K562 (cell line): ENCODE measurements at regions of chr11 and their contacts with region 1.

Region 1: DNA sequence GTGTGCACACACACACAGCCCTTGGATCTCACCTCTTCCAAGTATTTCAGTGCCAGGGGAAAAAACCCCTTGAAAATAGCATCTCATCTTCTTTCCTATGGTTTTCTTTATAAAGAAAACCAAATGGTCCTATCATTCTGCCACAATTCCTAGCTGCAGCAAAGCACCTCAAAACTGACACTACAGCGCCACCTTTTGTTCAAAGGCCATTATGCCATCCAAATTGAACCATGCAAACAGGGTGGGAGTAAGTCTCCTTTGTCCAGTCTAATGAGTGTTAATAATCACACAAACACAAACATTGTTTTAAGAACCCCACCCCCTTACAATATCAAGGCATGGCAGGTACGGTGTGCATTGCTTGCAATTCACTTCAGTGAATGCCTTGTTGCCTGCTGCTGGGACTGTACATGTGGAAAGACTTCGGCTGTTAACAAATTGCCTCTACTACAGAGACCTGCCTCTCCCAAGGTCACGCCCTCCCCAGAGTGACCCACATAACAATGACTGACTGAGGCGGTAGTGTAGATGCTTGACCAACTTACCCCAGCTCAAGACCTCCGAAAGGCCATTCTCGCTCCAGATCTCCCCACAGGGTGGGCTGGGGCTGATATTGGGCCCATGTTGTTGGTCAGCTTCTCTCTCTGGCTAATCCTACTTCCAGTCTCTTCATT is 31.7 kb downstream of the FAM181B start:
- DNase-seq: peak; percentile 53 to 61 (median 56)
- ATAC-seq: peak; percentile 89
- H3K4me3 ChIP-seq: no peak overlapping the region
- H3K27ac ChIP-seq: no peak overlapping the region
- H3K4me1 ChIP-seq: no peaks in the 10 kb centered on the region
- H3K27me3 ChIP-seq: no peaks in the 10 kb centered on the region; a peak in 1 of 5 replicates
- CTCF ChIP-seq: peak; percentile 77 to 83 (median 77)
- EP300 ChIP-seq: no peak
- POLR2A ChIP-seq: no peak
- RAD21 ChIP-seq: peak; percentile 56 to 72

Region 2: DNA sequence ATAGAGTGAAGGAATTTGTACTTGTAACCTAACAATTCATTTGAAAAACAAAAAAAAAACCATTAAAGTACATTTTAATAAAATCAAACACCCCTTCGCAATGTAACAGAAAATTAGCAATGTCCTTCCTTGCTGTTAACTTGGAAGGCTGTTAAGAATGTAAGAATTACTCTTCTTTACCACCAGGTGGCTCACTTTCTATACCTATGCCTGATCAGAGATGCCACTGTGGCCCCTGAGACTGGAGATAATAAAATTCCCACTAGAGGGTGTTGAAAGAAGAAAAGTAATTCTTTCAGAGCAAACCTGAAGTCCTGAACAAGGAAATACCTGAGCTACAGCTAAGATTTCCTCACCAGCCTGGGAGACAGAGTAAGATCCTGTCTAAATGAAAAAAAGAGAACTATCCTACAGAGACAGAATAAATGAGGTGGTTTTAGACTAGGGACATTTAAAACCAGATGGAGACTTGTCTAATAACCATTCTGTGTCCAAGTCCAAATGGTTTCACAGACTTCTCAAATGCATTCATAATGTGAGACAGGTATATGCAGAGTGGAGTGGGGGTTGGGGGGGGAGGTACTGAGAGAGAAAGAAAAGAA is 1057.6 kb before region 1 on chr11:
- CTCF ChIA-PET with region 1: interaction called, 3 read pairs
- POLR2A ChIA-PET with region 1: no interaction called
- in situ Hi-C with region 1: no loop called
- intact Hi-C with region 1: loop called (anchors 1 kb)
- DNase-seq: peak; percentile 23 to 53 (median 38)
- ATAC-seq: peak; percentile 56; the same call in 1 of the 3 replicates
- H3K4me3 ChIP-seq: no peak overlapping the region
- H3K27ac ChIP-seq: no peak overlapping the region
- H3K4me1 ChIP-seq: no peaks in the 10 kb centered on the region
- H3K27me3 ChIP-seq: no peaks in the 10 kb centered on the region
- CTCF ChIP-seq: peak; percentile 48 to 53 (median 49); a peak in 3 of 6 replicates
- EP300 ChIP-seq: no peak
- POLR2A ChIP-seq: no peak
- RAD21 ChIP-seq: peak; percentile 33 to 54; a peak in 2 of 4 replicates

Region 3: GRCh38 chr11:82682003-82682751 is 19.8 kb before region 1 on chr11:
- CTCF ChIA-PET with region 1: interaction called, 13 read pairs
- POLR2A ChIA-PET with region 1: no interaction called
- in situ Hi-C with region 1: no loop called
- intact Hi-C with region 1: no loop called
- DNase-seq: peak; percentile 35 to 78 (median 44)
- ATAC-seq: peak; percentile 97
- H3K4me3 ChIP-seq: no peak overlapping the region
- H3K27ac ChIP-seq: no peak overlapping the region
- H3K4me1 ChIP-seq: no peaks in the 10 kb centered on the region; a peak in 1 of 5 replicates
- H3K27me3 ChIP-seq: no peaks in the 10 kb centered on the region
- CTCF ChIP-seq: peak; percentile 56 to 71 (median 59); a peak in 5 of 6 replicates
- EP300 ChIP-seq: no peak
- POLR2A ChIP-seq: no peak
- RAD21 ChIP-seq: peak; percentile 69 to 80

Region 4: DNA sequence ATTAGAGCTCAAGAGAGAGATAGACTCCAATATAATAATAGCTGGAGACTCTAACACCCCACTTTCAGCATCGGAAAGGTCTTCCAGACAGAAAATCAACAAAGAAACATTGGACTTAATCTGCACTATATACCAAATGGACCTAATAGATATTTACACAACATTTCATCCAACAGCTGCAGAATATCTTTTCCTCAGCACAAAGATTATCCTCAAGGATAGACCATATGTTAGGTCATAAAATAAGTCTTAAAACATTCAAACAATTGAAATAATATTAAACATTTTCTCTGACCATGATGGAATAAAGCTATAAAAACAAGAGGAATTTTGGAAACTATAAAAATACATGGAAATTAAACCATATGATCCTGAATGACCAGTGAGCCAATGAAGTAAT is 76.8 kb after region 1 on chr11:
- CTCF ChIA-PET with region 1: no interaction called
- POLR2A ChIA-PET with region 1: no interaction called
- in situ Hi-C with region 1: no loop called
- intact Hi-C with region 1: no loop called
- DNase-seq: no peak
- ATAC-seq: no peak
- H3K4me3 ChIP-seq: no peak overlapping the region
- H3K27ac ChIP-seq: no peak overlapping the region
- H3K4me1 ChIP-seq: peaks cover 0 to 6% of the 10 kb centered on the region in 2 experiments; a peak in 1 of 5 replicates
- H3K27me3 ChIP-seq: no peaks in the 10 kb centered on the region
- CTCF ChIP-seq: no peak
- EP300 ChIP-seq: no peak
- POLR2A ChIP-seq: no peak
- RAD21 ChIP-seq: no peak